ENCODE measurements at regions of chr11 and their contacts with region 1.

Region 1: DNA sequence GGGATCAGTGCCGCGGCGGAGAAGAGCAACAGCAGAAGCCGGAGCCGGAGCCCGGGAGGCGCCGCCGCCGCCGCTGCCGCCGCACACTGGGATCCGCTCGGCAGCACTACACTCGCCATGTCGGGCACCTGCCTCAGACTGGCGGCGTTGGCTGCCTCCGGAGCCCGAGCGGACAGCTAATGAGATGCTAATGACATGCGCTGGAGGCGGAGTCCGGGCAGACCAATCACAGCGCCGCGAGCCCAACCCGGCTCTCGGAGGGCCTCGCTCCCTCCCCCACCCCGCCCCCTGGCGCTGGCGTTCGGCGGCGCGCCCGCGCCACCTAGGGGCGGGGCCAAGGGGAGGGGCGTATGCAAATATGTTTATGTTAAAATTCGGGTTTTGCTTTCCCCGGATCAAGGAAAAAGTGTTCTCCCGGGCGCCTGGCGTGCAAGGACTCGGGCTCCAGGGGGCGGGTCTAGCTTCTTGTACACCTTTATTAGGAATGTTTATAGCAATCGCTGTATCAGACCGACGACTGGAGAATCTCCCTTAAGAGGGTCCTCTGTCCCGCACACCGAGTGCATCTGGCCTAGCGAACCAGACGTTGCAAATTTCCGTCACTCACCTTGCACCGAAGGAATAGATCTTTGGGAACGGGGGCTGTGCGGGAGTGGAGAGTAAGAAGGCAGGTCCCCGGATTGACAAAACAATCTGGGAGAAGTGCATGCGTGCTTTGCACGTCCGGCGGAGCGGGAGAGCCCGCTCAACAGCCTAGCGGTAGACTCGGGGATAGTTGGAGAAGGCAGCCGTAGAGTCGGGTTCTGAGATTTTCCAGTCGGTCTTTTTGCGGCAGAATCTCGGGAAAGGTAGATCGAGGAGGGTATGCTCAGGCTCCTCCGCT is at the start of gene CADM1:
- DNase-seq: peak; percentile 95
- ATAC-seq: peak; percentile 93
- H3K4me3 ChIP-seq: peak within 1 kb of the TSS; percentile 60
- H3K27ac ChIP-seq: peak within 1 kb of the TSS; percentile 22
- H3K4me1 ChIP-seq: 0 out of 2 replicates have a peak, but pooled peaks cover 2% of the 10 kb centered on the region
- H3K27me3 ChIP-seq: peaks cover 13% of the 10 kb centered on the region
- CTCF ChIP-seq: peak; percentile 80
- POLR2A ChIP-seq: peak; percentile 97
- RAD21 ChIP-seq: peak; percentile 72
- total RNA-seq, gene CADM1: 62.2 and 77.1 TPM in 2 replicates

Region 2: GRCh38 chr11:114774599-114775361 is 729.7 kb before region 1 on chr11:
- CTCF ChIA-PET with region 1: no interaction called
- POLR2A ChIA-PET with region 1: no interaction called
- dilution Hi-C with region 1: no loop called
- in situ Hi-C with region 1: no loop called
- intact Hi-C with region 1: loop called (anchors 2 kb)
- DNase-seq: peak; percentile 46
- ATAC-seq: peak; percentile 98
- H3K4me3 ChIP-seq: no peak overlapping the region
- H3K27ac ChIP-seq: no peak overlapping the region
- H3K4me1 ChIP-seq: no peaks in the 10 kb centered on the region
- H3K27me3 ChIP-seq: peaks cover 2% of the 10 kb centered on the region; the same call in 1 of the 2 replicates
- CTCF ChIP-seq: peak; percentile 78
- POLR2A ChIP-seq: no peak
- RAD21 ChIP-seq: peak; percentile 89

Region 3: DNA sequence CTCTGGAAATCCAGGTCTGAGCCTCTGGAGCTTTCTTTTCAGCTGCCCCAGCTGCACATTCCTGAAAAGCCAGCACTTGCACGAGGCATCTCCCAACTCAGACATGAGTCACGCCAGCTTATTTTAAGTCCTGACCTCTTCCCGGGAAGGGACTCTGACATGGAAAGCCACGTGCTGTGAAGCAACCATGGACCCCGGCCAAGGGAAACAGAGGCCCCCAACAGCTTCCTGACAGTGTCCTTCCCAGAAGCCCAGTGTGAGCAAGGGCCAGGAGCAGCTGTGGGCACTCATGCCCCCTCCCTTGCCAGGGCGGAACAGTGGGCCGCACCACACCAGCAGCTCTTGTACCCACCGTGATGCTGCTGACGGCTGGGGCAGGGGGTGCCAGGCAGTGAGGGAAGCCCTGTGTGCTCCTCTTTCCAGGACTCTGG is 118.5 kb after region 1 on chr11:
- CTCF ChIA-PET with region 1: no interaction called
- POLR2A ChIA-PET with region 1: no interaction called
- dilution Hi-C with region 1: no loop called
- in situ Hi-C with region 1: no loop called
- intact Hi-C with region 1: loop called (anchors 2 kb)
- DNase-seq: peak; percentile 100
- ATAC-seq: peak; percentile 87
- H3K4me3 ChIP-seq: no peak overlapping the region
- H3K27ac ChIP-seq: peak overlapping the region; percentile 66
- H3K4me1 ChIP-seq: peaks cover 17% of the 10 kb centered on the region
- H3K27me3 ChIP-seq: peaks cover 3% of the 10 kb centered on the region
- CTCF ChIP-seq: no peak
- POLR2A ChIP-seq: no peak
- RAD21 ChIP-seq: 0 out of 2 replicates have a peak, but pooled peaks have one; percentile 23

Region 4: DNA sequence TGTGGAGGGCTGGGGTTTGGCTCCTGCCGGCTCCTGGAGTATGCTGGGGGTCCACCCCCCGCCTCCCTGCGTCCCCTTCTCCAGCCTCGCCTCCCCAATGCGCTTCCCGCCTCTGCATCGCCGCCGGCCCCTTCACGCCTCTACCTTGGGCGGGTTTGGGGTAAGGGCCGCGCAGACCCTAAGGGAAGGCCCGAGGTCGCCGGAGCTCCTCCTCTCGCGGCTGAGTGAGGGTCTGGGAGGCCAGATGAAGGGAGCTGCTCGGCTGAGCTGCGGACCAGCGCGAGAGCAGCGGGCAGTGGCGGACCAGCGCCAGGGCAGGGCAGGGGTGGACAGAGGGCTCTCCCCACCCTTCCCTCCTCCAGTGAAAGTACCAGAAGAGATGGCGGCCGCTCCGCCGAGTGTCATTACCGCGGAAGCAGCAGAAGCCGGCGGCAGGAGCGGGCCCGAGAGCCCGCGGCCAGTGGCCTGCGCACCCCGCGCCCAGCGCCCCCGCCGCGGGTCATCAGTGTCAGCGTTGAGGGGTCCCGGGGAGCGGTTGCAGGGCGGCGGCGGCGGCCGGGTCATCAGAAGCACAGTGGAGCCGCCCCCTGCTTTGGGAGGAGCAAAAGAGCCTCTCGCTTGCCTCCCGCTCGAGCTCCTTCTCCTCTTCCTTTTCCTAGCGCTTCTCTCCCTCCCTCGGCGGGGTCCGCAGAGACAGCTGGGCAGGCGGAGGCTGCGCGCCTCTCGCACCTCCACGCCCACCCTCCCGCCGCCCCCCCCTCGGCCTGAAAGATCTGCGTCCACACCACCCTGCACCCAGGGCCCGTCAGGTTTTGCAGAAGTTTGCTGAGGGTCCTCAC is 255.3 kb after region 1 on chr11:
- CTCF ChIA-PET with region 1: no interaction called
- POLR2A ChIA-PET with region 1: no interaction called
- dilution Hi-C with region 1: no loop called
- in situ Hi-C with region 1: no loop called
- intact Hi-C with region 1: loop called (anchors 2 kb)
- DNase-seq: no peak
- ATAC-seq: peak; percentile 82
- H3K4me3 ChIP-seq: peak overlapping the region; percentile 53
- H3K27ac ChIP-seq: peak overlapping the region; percentile 25
- H3K4me1 ChIP-seq: peaks cover 8% of the 10 kb centered on the region
- H3K27me3 ChIP-seq: no peaks in the 10 kb centered on the region
- CTCF ChIP-seq: no peak
- POLR2A ChIP-seq: no peak
- RAD21 ChIP-seq: no peak

Region 5: GRCh38 chr11:116162886-116163230 is 658.3 kb after region 1 on chr11:
- CTCF ChIA-PET with region 1: no interaction called
- POLR2A ChIA-PET with region 1: no interaction called
- dilution Hi-C with region 1: no loop called
- in situ Hi-C with region 1: no loop called
- intact Hi-C with region 1: loop called (anchors 10 kb)
- DNase-seq: no peak
- ATAC-seq: no peak
- H3K4me3 ChIP-seq: no peak overlapping the region
- H3K27ac ChIP-seq: no peak overlapping the region
- H3K4me1 ChIP-seq: no peaks in the 10 kb centered on the region
- H3K27me3 ChIP-seq: peaks cover 4% of the 10 kb centered on the region; the same call in 1 of the 2 replicates
- CTCF ChIP-seq: no peak
- POLR2A ChIP-seq: no peak
- RAD21 ChIP-seq: no peak

Measured in IMR-90 (cell line).